CD14-positive monocyte (primary cell): ENCODE measurements at regions of chr20 and their contacts with region 1.

Region 1: DNA sequence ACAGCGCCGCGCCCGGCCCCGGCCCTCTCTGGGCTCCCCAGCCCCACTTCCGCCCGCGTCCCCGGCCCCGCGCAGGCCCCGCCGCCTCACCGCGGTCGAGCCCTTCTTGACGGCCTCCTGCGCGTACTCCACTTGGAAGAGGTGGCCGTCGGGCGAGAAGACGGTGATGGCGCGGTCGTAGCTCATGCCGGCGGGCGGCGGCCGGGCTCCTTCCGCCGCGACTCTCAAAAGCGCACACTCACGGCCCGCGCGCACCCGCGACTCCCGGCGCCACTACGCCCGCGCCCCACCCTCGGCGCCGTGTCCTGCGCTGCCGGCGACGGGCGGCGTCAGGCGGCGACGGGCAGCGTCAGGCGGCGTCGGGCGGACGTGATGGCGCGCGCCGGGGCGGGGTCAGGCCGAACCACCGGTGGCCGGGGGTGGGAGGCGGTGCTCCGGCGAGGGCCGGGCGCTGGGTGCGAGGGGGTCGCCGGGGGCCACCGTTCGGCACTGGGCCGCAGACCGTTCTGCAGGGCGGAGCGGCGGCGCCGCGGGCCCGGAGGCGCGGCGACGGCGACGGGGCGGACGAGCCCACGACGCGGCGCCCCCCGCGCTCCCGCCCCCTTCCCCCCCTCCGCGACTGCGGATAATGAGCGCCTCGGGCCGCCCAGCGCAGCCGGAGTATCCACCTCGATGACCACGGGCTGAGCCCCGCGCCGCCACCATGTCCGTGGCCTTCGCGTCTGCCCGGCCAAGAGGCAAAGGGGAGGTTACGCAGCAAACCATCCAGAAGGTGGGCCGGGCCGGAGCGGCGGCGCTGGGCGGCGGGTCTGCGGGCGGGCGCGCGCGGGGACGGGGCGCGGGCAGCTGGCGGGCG is at the starts of genes PSMA7 and SS18L1:
- DNase-seq: peak; percentile 82 to 89 (median 88)
- H3K4me3 ChIP-seq: peak within 1 kb of the TSS; percentile 60 to 89 (median 69)
- H3K4me3 Mint-ChIP-seq: peak within 1 kb of the TSS; percentile 89 to 94
- H3K27ac ChIP-seq: peak within 1 kb of the TSS; percentile 75 to 89
- H3K27ac Mint-ChIP-seq: peak within 1 kb of the TSS; percentile 90 to 97 (median 94)
- H3K4me1 ChIP-seq: peaks cover 27 to 35% of the 10 kb centered on the region in 2 donors
- H3K4me1 Mint-ChIP-seq: peaks cover 42% of the 10 kb centered on the region
- H3K27me3 ChIP-seq: no peaks in the 10 kb centered on the region
- H3K27me3 Mint-ChIP-seq: no peaks in the 10 kb centered on the region
- CTCF ChIP-seq: no peak
- polyA plus RNA-seq, gene PSMA7: 402 to 668 (median 527) TPM
- polyA plus RNA-seq, gene SS18L1: 0.75 to 16.5 (median 1.1) TPM

Region 2: DNA sequence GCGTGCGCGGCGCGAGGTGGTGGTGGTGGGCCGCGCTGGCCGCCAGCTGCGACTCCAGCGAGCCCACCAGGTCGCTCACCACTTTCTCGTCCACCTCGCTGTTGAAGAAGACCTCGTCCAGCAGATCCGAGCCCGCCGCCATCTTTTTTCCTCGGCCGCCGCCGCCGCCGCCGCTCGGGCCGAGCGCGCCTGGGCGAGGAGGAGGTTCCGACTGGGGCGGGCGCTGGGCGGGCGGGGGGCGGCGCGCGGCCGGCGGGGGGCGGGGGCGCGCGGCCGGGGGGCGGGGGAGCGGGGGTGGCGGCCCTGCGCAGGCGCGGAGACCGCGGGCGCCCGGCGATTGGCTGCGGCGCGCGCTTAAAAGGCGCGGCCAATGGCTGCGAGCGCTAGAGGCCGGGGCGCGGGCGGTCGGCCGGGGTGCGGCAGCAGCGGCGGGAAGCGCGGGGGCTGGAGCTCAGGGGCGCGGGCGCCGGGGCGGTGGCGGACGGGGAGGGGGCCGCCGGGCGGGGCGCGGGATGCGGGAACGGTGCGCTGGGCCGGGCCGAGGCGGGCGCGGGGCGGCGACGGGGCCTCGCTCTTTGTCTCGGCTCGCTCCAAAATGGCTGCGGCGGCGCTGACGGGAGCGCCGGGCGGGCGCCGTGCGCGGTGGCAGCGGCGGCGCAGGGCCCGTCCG is 77.5 kb before region 1 on chr20 and contains the start of gene TAF4:
- intact Hi-C with region 1: loop called (anchors 2 to 5 kb)
- DNase-seq: peak; percentile 68 to 84 (median 79)
- H3K4me3 ChIP-seq: peak within 1 kb of the TSS; percentile 62 to 89 (median 89)
- H3K4me3 Mint-ChIP-seq: peak within 1 kb of the TSS; percentile 87 to 96
- H3K27ac ChIP-seq: peak within 1 kb of the TSS in 1 of 2 donors; percentile 68
- H3K27ac Mint-ChIP-seq: peak within 1 kb of the TSS in 6 of 7 donors; percentile 53 to 90 (median 80)
- H3K4me1 ChIP-seq: peaks cover 44 to 53% of the 10 kb centered on the region in 2 donors
- H3K4me1 Mint-ChIP-seq: peaks cover 49% of the 10 kb centered on the region
- H3K27me3 ChIP-seq: no peaks in the 10 kb centered on the region
- H3K27me3 Mint-ChIP-seq: peaks cover 4 to 21% (median 4%) of the 10 kb centered on the region in 3 donors
- CTCF ChIP-seq: no peak
- polyA plus RNA-seq, gene TAF4: 0.48 to 14.9 (median 0.99) TPM

Region 3: DNA sequence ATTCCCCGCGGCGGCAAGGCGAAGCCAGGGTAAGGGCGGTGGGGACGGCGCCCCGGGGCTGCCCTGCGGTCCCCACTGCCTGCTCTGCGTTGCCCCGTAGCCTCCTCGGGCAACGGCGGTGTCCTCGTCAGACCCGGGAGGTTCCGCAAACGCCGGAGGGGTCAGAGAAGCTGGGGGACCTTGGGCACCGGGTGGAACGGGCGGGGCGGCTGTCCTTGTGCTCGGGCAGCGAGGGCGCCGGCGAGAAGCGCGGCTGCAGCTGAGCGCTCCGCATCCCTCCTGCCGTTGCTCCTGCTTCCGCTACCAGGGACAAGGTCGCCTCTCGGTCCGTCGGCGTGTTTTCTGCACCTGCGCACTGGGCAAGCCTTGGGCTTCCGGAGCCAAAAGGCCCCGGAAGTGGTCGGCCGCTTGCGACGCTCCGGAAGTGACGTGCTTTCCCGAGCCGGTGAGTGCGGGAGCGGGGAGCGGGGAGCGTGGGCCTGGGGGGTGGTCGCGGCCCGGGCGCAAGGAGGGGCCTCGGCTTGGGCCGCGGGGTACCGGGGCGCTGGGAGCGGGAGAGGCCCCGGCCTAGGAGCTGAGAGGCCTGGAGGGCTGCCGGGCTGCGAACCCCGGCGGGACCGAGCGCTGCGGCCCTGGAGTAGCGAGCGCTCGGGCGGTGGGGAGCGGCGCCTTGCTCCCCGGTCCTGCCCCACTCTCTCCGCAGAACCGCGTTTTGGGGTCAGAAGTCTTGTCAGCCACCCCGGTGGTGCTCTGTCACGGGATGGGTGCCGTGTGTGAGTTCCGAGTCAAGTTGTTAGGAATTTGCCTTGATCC is 39.5 kb after region 1 on chr20 and contains the start of gene MTG2:
- intact Hi-C with region 1: loop called (anchors 2 to 5 kb)
- DNase-seq: peak; percentile 96 to 97 (median 96)
- H3K4me3 ChIP-seq: peak within 1 kb of the TSS; percentile 77 to 99 (median 84)
- H3K4me3 Mint-ChIP-seq: peak within 1 kb of the TSS; percentile 87 to 91
- H3K27ac ChIP-seq: peak within 1 kb of the TSS; percentile 57 to 92
- H3K27ac Mint-ChIP-seq: peak within 1 kb of the TSS; percentile 89 to 96 (median 93)
- H3K4me1 ChIP-seq: peaks cover 20 to 31% of the 10 kb centered on the region in 2 donors
- H3K4me1 Mint-ChIP-seq: peaks cover 43% of the 10 kb centered on the region
- H3K27me3 ChIP-seq: no peaks in the 10 kb centered on the region
- H3K27me3 Mint-ChIP-seq: peaks cover 0 to 2% (median 0%) of the 10 kb centered on the region in 3 donors
- CTCF ChIP-seq: no peak
- polyA plus RNA-seq, gene MTG2: 10.8 to 16.1 (median 14.9) TPM

Region 4: GRCh38 chr20:62321521-62321948 is 178.2 kb after region 1 on chr20:
- intact Hi-C with region 1: no loop called
- DNase-seq: no peak
- H3K4me3 ChIP-seq: no peak overlapping the region
- H3K4me3 Mint-ChIP-seq: no peak overlapping the region
- H3K27ac ChIP-seq: no peak overlapping the region
- H3K27ac Mint-ChIP-seq: peak overlapping the region in 1 of 7 donors; percentile 3
- H3K4me1 ChIP-seq: no peaks in the 10 kb centered on the region
- H3K4me1 Mint-ChIP-seq: no peaks in the 10 kb centered on the region
- H3K27me3 ChIP-seq: no peaks in the 10 kb centered on the region
- H3K27me3 Mint-ChIP-seq: peaks cover 0 to 1% (median 0%) of the 10 kb centered on the region in 3 donors
- CTCF ChIP-seq: no peak

Region 5: GRCh38 chr20:62352402-62353288 is 209.3 kb after region 1 on chr20:
- intact Hi-C with region 1: no loop called
- DNase-seq: no peak
- H3K4me3 ChIP-seq: no peak overlapping the region
- H3K4me3 Mint-ChIP-seq: no peak overlapping the region
- H3K27ac ChIP-seq: no peak overlapping the region
- H3K27ac Mint-ChIP-seq: peak overlapping the region in 1 of 7 donors; percentile 85
- H3K4me1 ChIP-seq: no peaks in the 10 kb centered on the region
- H3K4me1 Mint-ChIP-seq: no peaks in the 10 kb centered on the region
- H3K27me3 ChIP-seq: peaks cover 0 to 9% of the 10 kb centered on the region in 2 donors
- H3K27me3 Mint-ChIP-seq: peaks cover 2 to 19% (median 10%) of the 10 kb centered on the region in 3 donors
- CTCF ChIP-seq: no peak

Region 6: GRCh38 chr20:62386383-62387218 is 243.3 kb after region 1 on chr20 and contains the start of gene RPS21:
- intact Hi-C with region 1: loop called in 1 of 2 experiments (anchors 5 kb)
- DNase-seq: peak; percentile 90 to 92 (median 90)
- H3K4me3 ChIP-seq: peak within 1 kb of the TSS; percentile 84 to 96 (median 84)
- H3K4me3 Mint-ChIP-seq: peak within 1 kb of the TSS; percentile 89 to 91
- H3K27ac ChIP-seq: peak within 1 kb of the TSS; percentile 57 to 96
- H3K27ac Mint-ChIP-seq: peak within 1 kb of the TSS; percentile 85 to 96 (median 91)
- H3K4me1 ChIP-seq: peaks cover 19 to 25% of the 10 kb centered on the region in 2 donors
- H3K4me1 Mint-ChIP-seq: peaks cover 30% of the 10 kb centered on the region
- H3K27me3 ChIP-seq: no peaks in the 10 kb centered on the region
- H3K27me3 Mint-ChIP-seq: no peaks in the 10 kb centered on the region
- CTCF ChIP-seq: no peak
- polyA plus RNA-seq, gene RPS21: 799 to 6,263 (median 968) TPM

Region 7: GRCh38 chr20:63980806-63981728 is 1837.7 kb after region 1 on chr20 and contains the start of gene PRPF6:
- intact Hi-C with region 1: loop called in 1 of 2 experiments (anchors 10 kb)
- DNase-seq: peak; percentile 96
- H3K4me3 ChIP-seq: peak within 1 kb of the TSS; percentile 65 to 83 (median 76)
- H3K4me3 Mint-ChIP-seq: peak within 1 kb of the TSS; percentile 83 to 92
- H3K27ac ChIP-seq: peak within 1 kb of the TSS; percentile 50 to 89
- H3K27ac Mint-ChIP-seq: peak within 1 kb of the TSS; percentile 82 to 95 (median 91)
- H3K4me1 ChIP-seq: peaks cover 32 to 48% of the 10 kb centered on the region in 2 donors
- H3K4me1 Mint-ChIP-seq: peaks cover 40% of the 10 kb centered on the region
- H3K27me3 ChIP-seq: peaks cover 0 to 5% of the 10 kb centered on the region in 2 donors
- H3K27me3 Mint-ChIP-seq: peaks cover 3 to 11% (median 10%) of the 10 kb centered on the region in 3 donors
- CTCF ChIP-seq: peak; percentile 86
- polyA plus RNA-seq, gene PRPF6: 29.1 to 47.7 (median 34.5) TPM